Psoas muscle (tissue), 8 donors: ENCODE measurements at regions of chr9 and their contacts with region 1.

Region 1: DNA sequence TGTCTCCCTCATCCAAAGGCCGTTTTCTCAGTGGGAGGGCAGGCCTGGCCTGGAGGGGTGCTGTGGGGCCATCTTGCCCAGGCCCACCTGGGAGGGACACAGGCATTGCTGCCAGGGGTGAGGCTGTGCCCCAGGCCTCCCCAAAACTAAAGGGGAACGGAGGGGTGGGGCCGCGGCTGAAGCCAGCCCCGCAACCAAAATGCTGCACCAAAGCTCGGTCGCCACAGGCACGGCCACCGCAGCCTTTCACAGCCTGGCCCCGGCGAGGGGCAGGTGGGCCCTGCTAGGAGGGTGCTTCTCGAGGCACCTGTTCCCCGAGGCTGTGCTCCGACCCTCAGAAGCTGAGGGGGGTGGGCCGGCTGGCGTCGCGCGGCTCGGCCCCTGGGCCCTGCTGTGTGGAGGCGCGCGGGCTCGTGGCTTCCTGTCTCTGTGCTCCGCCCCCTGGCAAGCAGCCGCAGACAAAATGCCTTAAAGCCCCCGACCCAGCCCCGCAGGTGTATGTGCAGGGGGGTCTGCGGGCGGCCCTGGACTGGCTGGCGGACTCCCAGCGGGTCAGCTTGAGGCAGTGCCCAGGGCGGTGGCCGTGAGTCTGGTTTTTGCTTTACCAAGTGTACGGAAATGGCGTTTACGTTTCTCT is 57.7 kb downstream of the JAK2 start:
- DNase-seq: no peak
- ATAC-seq: peak; percentile 11 to 51 (median 26)
- H3K4me3 ChIP-seq: no peak overlapping the region
- H3K27ac ChIP-seq: peak overlapping the region; percentile 75
- H3K4me1 ChIP-seq: peaks cover 23% of the 10 kb centered on the region
- H3K27me3 ChIP-seq: no peaks in the 10 kb centered on the region
- CTCF ChIP-seq: no peak

Region 2: GRCh38 chr9:4750023-4750673 is 292.6 kb before region 1 on chr9:
- intact Hi-C with region 1: loop called in 1 of 2 experiments (anchors 10 kb)
- DNase-seq: no peak
- ATAC-seq: peak; percentile 20 to 62 (median 38)
- H3K4me3 ChIP-seq: no peak overlapping the region
- H3K27ac ChIP-seq: no peak overlapping the region
- H3K4me1 ChIP-seq: no peaks in the 10 kb centered on the region
- H3K27me3 ChIP-seq: no peaks in the 10 kb centered on the region
- CTCF ChIP-seq: peak; percentile 55

Region 3: GRCh38 chr9:4997196-4997595 is 45.6 kb before region 1 on chr9:
- intact Hi-C with region 1: loop called in 1 of 2 experiments (anchors 2 kb)
- DNase-seq: no peak
- ATAC-seq: peak in 3 of 4 donors; percentile 23 to 40 (median 30)
- H3K4me3 ChIP-seq: no peak overlapping the region
- H3K27ac ChIP-seq: no peak overlapping the region
- H3K4me1 ChIP-seq: peaks cover 11% of the 10 kb centered on the region
- H3K27me3 ChIP-seq: no peaks in the 10 kb centered on the region
- CTCF ChIP-seq: no peak